ENCODE measurements at regions of chr3 and their contacts with region 1.

Region 1: DNA sequence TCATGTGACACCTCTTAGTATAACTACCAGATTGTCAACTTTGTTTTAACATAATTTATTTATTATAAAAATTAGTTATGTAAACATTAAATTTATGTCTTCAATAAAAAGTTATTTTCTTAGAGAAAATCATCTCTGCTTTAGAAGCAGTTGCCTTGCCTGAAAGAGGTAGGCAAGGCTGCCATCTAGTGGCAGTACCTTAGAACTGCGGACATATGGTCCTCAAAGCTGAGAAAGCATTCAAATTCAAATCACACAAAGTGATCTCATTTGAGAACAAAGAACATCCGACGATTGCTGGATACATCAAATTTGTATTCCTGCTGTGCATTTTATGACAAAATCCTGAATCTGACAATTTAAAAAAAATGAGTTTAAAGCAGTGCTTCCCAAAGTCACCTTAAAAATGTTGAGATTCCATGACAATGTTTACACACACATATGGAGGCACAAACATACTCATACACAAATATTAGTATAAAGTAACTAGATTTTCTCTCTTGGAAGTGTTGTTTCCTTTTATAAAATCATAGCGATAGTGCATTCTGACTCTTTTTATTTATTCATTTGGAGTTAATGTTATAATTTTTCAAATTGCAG is 617.4 kb downstream of the CADM2 start:
- DNase-seq: peak; percentile 57
- H3K4me3 Mint-ChIP-seq: no peak overlapping the region
- H3K27ac Mint-ChIP-seq: no peak overlapping the region
- H3K4me1 Mint-ChIP-seq: no peaks in the 10 kb centered on the region
- H3K27me3 Mint-ChIP-seq: no peaks in the 10 kb centered on the region

Region 2: DNA sequence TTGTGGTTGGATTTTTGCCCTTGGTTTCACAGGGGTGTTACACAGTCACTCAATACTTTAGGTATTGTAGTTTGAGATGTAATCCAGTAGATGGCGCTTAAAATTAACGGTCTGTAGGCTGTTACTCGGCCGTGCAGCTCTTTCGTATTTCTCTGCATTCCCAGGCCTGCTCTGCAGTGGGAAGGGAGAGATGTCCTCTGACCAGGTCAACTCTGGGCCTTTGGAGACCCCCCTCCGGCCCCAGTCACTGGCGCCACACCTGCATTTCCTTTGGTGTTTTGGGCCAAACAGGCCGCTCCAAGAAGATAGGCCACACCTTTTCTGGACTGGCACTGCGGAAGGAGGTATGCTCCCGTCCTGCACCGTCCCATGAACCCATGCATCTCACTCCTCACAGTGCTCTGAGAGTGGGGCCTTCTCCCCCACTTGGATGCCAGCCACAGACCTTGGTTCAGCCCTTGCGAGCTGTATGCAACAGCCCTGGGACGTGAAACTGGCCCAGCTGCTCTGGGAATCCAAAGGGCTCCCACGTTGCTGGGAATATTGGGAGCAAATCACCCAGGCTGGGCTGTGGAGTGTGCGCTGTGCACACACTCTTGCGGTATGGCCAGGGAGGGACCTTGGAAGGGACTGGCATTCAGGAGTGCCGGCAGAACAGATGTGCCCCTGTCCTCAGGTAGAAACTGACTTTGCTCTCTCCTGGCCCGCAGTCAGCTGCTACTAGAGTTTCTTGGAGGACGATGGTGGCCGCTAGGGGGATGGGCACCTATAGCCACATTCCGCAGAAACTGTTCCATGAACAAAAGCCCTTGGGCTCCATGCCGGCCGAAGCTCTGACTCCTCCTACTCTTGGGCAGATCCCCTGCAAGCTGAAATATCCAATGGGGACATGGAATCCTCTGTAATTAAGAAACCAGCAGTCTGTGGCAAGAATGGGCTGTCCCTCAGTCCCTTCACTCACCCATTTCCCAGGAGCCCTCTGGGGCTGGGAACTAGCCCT is 1027.9 kb before region 1 on chr3:
- CTCF ChIA-PET with region 1: interaction called, 6 read pairs
- POLR2A ChIA-PET with region 1: no interaction called
- intact Hi-C with region 1: loop called (anchors 1 kb)
- DNase-seq: no peak
- H3K4me3 Mint-ChIP-seq: no peak overlapping the region
- H3K27ac Mint-ChIP-seq: no peak overlapping the region
- H3K4me1 Mint-ChIP-seq: no peaks in the 10 kb centered on the region
- H3K27me3 Mint-ChIP-seq: no peaks in the 10 kb centered on the region

Region 3: GRCh38 chr3:85808746-85809145 is 232.6 kb after region 1 on chr3:
- CTCF ChIA-PET with region 1: no interaction called
- POLR2A ChIA-PET with region 1: no interaction called
- intact Hi-C with region 1: no loop called
- DNase-seq: no peak
- H3K4me3 Mint-ChIP-seq: no peak overlapping the region
- H3K27ac Mint-ChIP-seq: no peak overlapping the region
- H3K4me1 Mint-ChIP-seq: no peaks in the 10 kb centered on the region
- H3K27me3 Mint-ChIP-seq: no peaks in the 10 kb centered on the region